Left cardiac atrium (tissue), 4 donors: ENCODE measurements at regions of chr7 and their contacts with region 1.

Region 1: GRCh38 chr7:32221736-32222135 is 151.5 kb upstream of the PDE1C start:
- DNase-seq: no peak
- ATAC-seq: no peak

Region 2: GRCh38 chr7:32079510-32079909 is 142.2 kb before region 1 on chr7:
- intact Hi-C with region 1: no loop called
- DNase-seq: no peak
- ATAC-seq: peak; percentile 90 to 91

Region 3: DNA sequence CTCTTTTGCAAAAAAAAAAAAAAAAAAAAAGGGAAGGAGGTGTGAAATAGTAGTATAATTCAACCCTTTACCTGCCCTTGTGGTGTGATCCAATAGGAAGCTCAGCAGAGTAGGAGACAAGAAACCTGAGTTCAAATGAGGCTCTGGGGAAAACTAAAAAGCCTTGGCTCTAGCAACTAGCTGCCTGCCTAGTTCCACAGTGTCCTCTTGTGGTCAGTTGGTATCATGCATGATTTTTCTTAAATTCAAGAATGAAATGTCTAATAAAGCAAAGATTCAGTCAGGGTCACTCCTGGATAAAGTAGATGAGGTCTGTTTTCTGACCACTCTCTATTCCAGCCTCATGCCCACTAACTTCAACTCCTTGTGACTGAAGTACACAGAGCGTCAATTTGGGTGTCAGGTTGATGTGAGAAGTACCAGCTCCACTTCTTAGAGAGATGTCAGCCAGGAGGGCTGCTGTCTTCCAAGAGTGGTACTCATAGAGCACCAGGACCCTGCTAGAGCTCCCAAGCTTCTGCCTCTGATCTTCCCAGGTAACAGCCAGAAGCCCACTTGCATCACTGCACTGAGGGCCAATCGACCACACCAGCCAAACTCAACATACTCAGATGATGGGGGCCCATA is 258.0 kb after region 1 on chr7:
- intact Hi-C with region 1: loop called in 1 of 2 experiments (anchors 10 kb)
- DNase-seq: no peak
- ATAC-seq: peak in 1 of 2 donors; percentile 29

Region 4: DNA sequence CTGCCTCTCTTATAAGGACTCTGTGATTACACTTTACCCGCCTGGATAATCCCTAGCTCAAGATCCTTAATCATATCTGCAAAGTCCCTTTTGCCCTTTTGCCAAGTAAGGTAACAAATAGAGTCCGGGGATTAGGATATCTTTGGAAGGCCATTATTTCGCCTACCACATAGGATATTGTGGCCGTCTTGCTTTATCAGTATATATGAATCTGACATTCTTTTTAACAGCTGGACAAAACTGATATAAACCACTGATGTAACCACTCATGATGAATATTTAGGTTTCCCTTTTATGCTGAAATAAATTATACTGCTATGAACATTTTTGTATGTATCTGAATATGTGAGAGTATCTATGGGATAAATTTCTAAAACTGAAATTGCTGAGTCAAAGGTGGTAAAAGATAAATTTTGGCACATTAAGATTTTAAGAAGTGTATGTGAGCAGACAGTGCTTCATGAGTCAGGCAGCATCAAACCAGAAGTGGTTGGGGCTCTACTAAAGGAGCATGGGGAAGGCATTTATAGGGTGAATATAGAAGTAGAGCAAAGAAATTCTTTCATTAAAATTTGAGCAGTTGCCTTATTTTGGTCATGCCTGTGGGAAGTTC is 318.3 kb after region 1 on chr7:
- intact Hi-C with region 1: no loop called
- DNase-seq: no peak
- ATAC-seq: no peak